CD4-positive, alpha-beta T cell (primary cell): ENCODE measurements at regions of chr1 and their contacts with region 1.

Region 1: DNA sequence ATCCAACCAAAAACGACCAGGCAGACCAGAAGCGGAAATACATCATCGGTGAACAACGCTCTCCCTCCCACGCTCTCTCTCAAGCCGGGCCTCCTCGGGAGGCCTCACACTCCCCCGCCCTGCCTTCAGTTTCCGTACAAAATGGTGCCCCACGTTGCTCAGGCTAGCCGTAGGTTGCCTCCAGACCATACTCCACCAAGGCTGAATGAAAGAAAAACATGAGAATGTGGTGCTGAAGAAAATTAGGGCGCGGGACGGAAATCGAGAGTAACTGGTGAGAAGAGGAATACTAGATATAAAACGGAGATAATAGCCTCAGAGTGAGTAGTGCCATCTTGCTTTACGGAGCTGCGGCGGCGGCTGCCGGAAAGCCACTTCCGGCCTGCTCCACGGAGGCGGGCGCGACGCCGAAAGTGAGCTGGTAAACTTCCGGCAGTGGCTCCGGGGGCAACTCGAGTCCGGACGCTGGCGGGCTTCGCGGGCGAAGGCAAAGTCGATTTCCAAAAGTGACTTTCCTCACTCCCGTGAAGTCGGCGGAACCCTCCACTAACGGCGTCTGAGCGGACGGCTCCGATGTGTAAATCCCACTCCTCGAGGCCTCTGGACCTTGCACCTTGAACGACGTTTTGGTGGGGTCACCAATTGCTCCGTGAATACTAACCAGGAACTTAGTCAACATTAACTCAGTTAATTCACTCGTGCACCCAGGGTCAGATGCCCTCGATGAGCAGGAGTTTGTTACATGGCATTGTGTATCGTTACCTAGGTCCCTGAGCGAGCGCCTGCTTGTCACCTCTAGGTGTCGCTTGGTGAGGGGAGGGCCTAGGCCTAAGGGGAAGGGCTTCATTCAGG is at the start of gene SH3BP5L:
- DNase-seq: peak; percentile 80 to 97 (median 87)
- ATAC-seq: peak; percentile 84
- H3K4me3 ChIP-seq: peak within 1 kb of the TSS; percentile 83
- H3K4me3 Mint-ChIP-seq: peak within 1 kb of the TSS; percentile 95
- H3K27ac ChIP-seq: peak within 1 kb of the TSS; percentile 96 to 98
- H3K27ac Mint-ChIP-seq: peak within 1 kb of the TSS; percentile 95
- H3K4me1 ChIP-seq: peaks cover 58% of the 10 kb centered on the region
- H3K4me1 Mint-ChIP-seq: peaks cover 64% of the 10 kb centered on the region
- H3K27me3 ChIP-seq: no peaks in the 10 kb centered on the region
- H3K27me3 Mint-ChIP-seq: no peaks in the 10 kb centered on the region
- CTCF ChIP-seq: peak; percentile 83
- total RNA-seq, gene SH3BP5L: 21.7 to 25.2 TPM

Region 2: DNA sequence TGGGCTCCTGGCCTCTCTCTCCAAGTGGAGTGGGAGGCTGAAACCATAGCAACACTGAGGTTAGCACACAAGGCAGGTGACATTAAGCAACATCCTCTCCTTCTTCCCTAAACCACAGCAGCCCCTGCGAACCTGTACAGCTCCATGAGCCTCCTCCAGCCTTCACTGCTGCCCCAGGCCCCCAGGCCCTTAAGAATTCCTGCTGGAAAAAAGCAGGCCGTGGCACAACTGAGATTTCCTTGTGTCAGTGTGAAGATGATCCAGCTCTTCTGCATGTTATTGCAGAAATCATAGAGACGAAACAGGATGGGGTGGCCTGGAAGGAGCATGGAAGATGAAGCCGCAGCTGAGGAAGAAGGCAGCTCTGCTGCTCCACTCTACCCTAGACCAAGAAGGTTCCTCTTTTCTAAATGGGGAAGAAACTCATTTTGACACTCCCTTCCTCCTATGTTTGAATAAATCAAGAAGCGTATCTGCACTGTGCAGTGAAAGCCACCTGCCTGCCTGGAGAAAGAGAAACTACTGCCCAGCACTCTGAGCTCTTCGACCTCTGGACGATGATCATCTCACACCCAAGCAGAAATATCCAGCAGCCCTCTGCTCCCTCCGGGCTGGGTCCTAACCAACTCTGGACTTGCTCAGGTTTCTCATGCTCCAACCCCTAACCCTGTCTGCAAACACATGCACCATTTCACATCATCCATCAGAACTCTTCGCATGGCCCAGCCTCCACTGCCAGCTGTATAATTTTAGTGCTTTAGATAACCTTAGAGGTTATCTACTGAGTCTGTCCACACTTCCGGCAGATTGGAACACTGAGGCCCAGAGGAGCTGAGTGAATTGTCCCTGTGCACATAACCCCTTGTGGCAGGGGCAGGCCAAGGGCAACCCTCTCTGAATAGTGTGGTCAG is 21.1 kb before region 1 on chr1:
- CTCF ChIA-PET with region 1: no interaction called
- POLR2A ChIA-PET with region 1: no interaction called
- intact Hi-C with region 1: no loop called
- DNase-seq: peak in 3 of 14 experiments; percentile 23 to 36 (median 34)
- ATAC-seq: peak; percentile 14
- H3K4me3 ChIP-seq: no peak overlapping the region
- H3K4me3 Mint-ChIP-seq: no peak overlapping the region
- H3K27ac ChIP-seq: no peak overlapping the region
- H3K27ac Mint-ChIP-seq: no peak overlapping the region
- H3K4me1 ChIP-seq: peaks cover 7% of the 10 kb centered on the region
- H3K4me1 Mint-ChIP-seq: peaks cover 10% of the 10 kb centered on the region
- H3K27me3 ChIP-seq: peaks cover 0 to 7% of the 10 kb centered on the region in 2 experiments
- H3K27me3 Mint-ChIP-seq: peaks cover 10% of the 10 kb centered on the region
- CTCF ChIP-seq: no peak

Region 3: DNA sequence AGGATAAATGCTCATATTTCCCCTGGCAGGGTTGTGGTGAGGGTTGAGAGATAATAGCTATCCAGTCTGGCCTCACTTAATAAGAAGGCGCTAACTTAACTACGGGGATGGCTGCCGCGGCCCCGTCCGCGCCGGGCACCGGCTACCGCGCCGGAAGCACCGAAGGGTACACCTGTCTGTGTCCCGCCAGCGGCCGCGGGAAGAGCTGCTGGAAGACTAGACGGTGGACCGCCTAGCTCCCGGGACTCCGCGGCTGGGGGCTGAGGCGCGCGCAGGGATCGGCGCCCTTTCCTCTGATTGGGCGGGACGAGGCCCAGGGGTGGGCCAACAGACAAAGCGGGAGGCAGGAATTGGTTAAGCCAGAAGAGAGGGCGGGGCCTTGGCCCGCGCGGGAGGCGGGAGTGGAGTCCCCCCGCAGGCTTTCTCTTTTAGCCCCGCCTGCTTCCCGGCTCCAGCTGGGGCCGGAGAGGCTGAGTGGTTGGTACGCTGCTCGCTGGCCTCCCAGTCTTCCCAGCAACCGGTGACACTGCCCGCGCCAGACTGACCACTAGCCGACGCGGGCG is 11.7 kb after region 1 on chr1 and contains the start of gene ZNF672:
- CTCF ChIA-PET with region 1: interaction called, 31 read pairs
- POLR2A ChIA-PET with region 1: interaction called, 98 read pairs
- intact Hi-C with region 1: loop called (anchors 1 kb)
- DNase-seq: peak; percentile 81 to 96 (median 92)
- ATAC-seq: peak; percentile 85
- H3K4me3 ChIP-seq: peak within 1 kb of the TSS; percentile 81
- H3K4me3 Mint-ChIP-seq: no peak within 1 kb of the TSS
- H3K27ac ChIP-seq: peak within 1 kb of the TSS; percentile 94 to 99
- H3K27ac Mint-ChIP-seq: no peak within 1 kb of the TSS
- H3K4me1 ChIP-seq: peaks cover 37% of the 10 kb centered on the region
- H3K4me1 Mint-ChIP-seq: peaks cover 30% of the 10 kb centered on the region
- H3K27me3 ChIP-seq: no peaks in the 10 kb centered on the region
- H3K27me3 Mint-ChIP-seq: peaks cover 7% of the 10 kb centered on the region
- CTCF ChIP-seq: no peak
- total RNA-seq, gene ZNF672: 35.9 to 38.4 TPM

Region 4: DNA sequence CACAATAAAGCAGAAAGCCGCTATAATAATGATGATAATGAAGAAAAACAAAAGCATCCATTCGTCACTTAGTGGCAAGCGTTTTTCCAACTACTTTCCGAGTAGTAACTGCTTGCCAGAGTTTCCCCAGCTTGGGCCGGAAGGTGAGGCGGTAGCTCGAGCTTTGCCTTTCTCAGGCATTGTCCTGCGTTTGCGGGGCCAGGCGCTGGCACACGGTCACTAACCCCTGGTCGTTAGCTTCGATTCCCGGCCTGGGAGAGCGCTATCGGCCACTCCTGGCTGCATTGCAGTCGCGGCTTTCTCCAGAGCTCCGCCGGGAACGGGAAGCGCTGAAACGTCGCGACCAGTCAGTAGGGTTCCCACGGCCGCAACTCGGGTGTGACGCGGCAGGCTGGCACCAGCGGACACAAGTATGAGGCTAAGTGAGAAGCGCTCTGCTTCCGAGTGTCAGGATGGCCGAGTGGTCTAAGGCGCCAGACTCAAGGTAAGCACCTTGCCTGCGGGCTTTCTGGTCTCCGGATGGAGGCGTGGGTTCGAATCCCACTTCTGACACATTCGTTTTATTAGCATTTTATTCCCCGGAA is 47.4 kb after region 1 on chr1:
- CTCF ChIA-PET with region 1: no interaction called
- POLR2A ChIA-PET with region 1: interaction called, 18 read pairs
- intact Hi-C with region 1: loop called in 1 of 2 experiments (anchors 1 kb)
- DNase-seq: peak; percentile 77 to 95 (median 91)
- ATAC-seq: peak; percentile 75
- H3K4me3 ChIP-seq: peak overlapping the region; percentile 71
- H3K4me3 Mint-ChIP-seq: peak overlapping the region; percentile 99
- H3K27ac ChIP-seq: peak overlapping the region; percentile 52 to 79
- H3K27ac Mint-ChIP-seq: peak overlapping the region; percentile 99
- H3K4me1 ChIP-seq: peaks cover 22% of the 10 kb centered on the region
- H3K4me1 Mint-ChIP-seq: peaks cover 35% of the 10 kb centered on the region
- H3K27me3 ChIP-seq: no peaks in the 10 kb centered on the region
- H3K27me3 Mint-ChIP-seq: peaks cover 14% of the 10 kb centered on the region
- CTCF ChIP-seq: no peak